ENCODE measurements at regions of chr20 and their contacts with region 1.

Region 1: GRCh38 chr20:561437-562231 is 18.0 kb upstream of the CSNK2A1 start:
- DNase-seq: peak in 1 of 3 donors; percentile 67
- ATAC-seq: peak; percentile 87 to 97 (median 92)
- H3K4me3 ChIP-seq: no peak overlapping the region
- H3K27ac ChIP-seq: no peak overlapping the region
- H3K4me1 ChIP-seq: no peaks in the 10 kb centered on the region
- H3K27me3 ChIP-seq: no peaks in the 10 kb centered on the region
- CTCF ChIP-seq: peak; percentile 89 to 97 (median 95)
- POLR2A ChIP-seq: no peak

Region 2: GRCh38 chr20:391041-391711 is 170.5 kb before region 1 on chr20:
- intact Hi-C with region 1: no loop called
- DNase-seq: peak in 1 of 3 donors; percentile 27
- ATAC-seq: peak; percentile 7 to 44 (median 22)
- H3K4me3 ChIP-seq: no peak overlapping the region
- H3K27ac ChIP-seq: peak overlapping the region; percentile 58 to 81 (median 69)
- H3K4me1 ChIP-seq: peaks cover 0 to 49% (median 25%) of the 10 kb centered on the region in 4 donors
- H3K27me3 ChIP-seq: no peaks in the 10 kb centered on the region
- CTCF ChIP-seq: no peak
- POLR2A ChIP-seq: no peak

Region 3: DNA sequence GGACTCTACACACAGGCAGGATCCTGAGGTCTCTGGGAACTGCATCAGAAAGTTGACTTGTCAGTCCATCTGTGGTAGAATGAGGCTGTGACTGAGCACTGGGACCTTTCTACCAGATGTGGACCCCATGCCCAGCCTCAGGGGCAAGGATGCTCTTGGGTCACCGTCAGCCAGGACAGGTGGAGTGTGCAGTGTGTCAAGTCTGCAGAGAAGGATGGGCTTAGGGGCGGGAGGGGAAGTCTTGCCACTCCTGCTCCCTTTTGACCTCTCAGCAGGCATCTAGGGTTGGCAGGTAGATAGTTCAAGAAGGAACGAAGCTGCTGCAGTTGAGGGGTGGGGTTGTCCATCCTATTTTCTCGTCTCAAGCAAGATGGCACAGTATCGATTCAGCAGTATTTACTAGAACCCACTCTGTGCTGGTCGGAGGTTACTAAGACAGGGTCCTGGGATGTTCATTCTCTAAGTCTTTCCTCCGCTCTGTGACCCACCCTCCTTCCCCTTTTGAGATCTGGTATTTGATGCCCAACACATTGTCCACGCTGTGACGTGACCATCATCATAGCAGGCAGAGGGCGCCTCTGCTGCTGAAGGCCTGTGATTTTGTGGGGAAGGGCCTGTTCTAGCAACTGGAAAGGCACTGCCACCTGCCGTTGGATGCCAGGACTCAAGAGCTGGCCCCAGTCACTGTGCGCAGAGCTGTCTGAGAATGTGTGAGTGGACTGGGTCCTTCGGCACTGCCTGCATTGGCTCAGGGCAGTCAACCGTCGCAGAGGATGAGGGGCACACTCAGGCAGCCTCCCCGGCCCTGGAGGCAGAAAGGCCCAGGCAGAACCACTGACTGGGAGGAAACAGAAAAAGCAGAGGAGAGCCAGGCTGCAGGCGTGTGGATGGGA is 130.4 kb before region 1 on chr20:
- intact Hi-C with region 1: no loop called
- DNase-seq: peak in 1 of 3 donors; percentile 46
- ATAC-seq: peak; percentile 23 to 34 (median 30)
- H3K4me3 ChIP-seq: no peak overlapping the region
- H3K27ac ChIP-seq: no peak overlapping the region
- H3K4me1 ChIP-seq: peaks cover 0 to 40% (median 17%) of the 10 kb centered on the region in 4 donors
- H3K27me3 ChIP-seq: no peaks in the 10 kb centered on the region
- CTCF ChIP-seq: peak; percentile 39 to 57 (median 46)
- POLR2A ChIP-seq: no peak

Region 4: GRCh38 chr20:492159-492558 is 69.5 kb before region 1 on chr20:
- intact Hi-C with region 1: no loop called
- DNase-seq: no peak
- ATAC-seq: no peak
- H3K4me3 ChIP-seq: no peak overlapping the region
- H3K27ac ChIP-seq: no peak overlapping the region
- H3K4me1 ChIP-seq: peaks cover 0 to 17% (median 8%) of the 10 kb centered on the region in 4 donors
- H3K27me3 ChIP-seq: no peaks in the 10 kb centered on the region
- CTCF ChIP-seq: no peak
- POLR2A ChIP-seq: no peak

Region 5: GRCh38 chr20:667391-667964 is 105.8 kb after region 1 on chr20:
- intact Hi-C with region 1: loop called (anchors 10 kb)
- DNase-seq: peak in 2 of 3 donors; percentile 61 to 71
- ATAC-seq: peak; percentile 49 to 75 (median 72)
- H3K4me3 ChIP-seq: no peak overlapping the region
- H3K27ac ChIP-seq: no peak overlapping the region
- H3K4me1 ChIP-seq: no peaks in the 10 kb centered on the region
- H3K27me3 ChIP-seq: peaks cover 0 to 11% of the 10 kb centered on the region in 2 donors
- CTCF ChIP-seq: peak; percentile 70 to 86 (median 80)
- POLR2A ChIP-seq: no peak

Region 6: DNA sequence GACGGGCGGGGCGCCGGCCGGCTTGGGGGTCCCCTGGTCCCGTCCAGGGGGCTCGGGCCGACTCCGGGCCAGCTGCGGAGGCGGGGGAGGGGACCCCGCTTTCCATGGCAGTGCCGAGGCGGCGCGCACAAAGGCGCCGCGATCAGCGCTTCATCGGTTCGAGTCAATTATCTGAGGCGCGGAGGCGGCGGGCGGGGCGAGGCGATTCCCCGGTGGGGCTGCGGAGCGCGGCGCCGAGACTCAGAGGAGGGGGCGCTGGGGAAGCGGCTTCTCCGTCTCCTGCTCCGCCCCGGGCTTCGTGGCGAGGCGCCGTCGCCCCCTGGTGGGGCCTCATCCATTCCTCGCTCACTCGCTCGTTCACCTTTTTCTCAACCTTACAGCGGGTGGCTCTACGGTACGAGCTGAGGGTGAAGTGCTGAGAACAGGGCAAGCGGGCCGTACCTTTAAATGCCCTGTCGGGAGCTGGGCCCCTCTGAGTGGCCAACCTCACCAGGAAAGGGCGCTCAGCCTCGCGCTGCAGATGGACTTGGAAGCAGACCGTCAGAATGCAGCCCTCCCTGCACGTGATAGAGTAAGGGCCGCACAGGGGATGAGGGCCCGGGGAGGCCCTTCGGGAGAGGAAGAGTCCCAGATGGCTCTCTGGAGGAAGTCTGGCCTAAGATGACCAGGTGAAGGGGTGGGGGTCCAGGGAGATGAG is 166.8 kb after region 1 on chr20:
- intact Hi-C with region 1: loop called (anchors 5 to 10 kb)
- DNase-seq: peak; percentile 58 to 63 (median 60)
- ATAC-seq: peak; percentile 80 to 91 (median 86)
- H3K4me3 ChIP-seq: peak overlapping the region; percentile 33 to 51 (median 34)
- H3K27ac ChIP-seq: no peak overlapping the region
- H3K4me1 ChIP-seq: peaks cover 0 to 7% (median 3%) of the 10 kb centered on the region in 4 donors
- H3K27me3 ChIP-seq: peaks cover 0 to 7% of the 10 kb centered on the region in 2 donors
- CTCF ChIP-seq: peak; percentile 60 to 72 (median 62)
- POLR2A ChIP-seq: no peak

Region 7: GRCh38 chr20:733861-734260 is 172.2 kb after region 1 on chr20:
- intact Hi-C with region 1: loop called (anchors 5 to 10 kb)
- DNase-seq: no peak
- ATAC-seq: no peak
- H3K4me3 ChIP-seq: no peak overlapping the region
- H3K27ac ChIP-seq: no peak overlapping the region
- H3K4me1 ChIP-seq: no peaks in the 10 kb centered on the region
- H3K27me3 ChIP-seq: no peaks in the 10 kb centered on the region
- CTCF ChIP-seq: no peak
- POLR2A ChIP-seq: no peak